IMR-90 (cell line): ENCODE measurements at regions of chr4 and their contacts with region 1.

Region 1: GRCh38 chr4:187576751-187577150 is 418.8 kb upstream of the ZFP42 start:
- DNase-seq: no peak
- ATAC-seq: no peak
- H3K4me3 ChIP-seq: no peak overlapping the region
- H3K27ac ChIP-seq: no peak overlapping the region
- H3K4me1 ChIP-seq: peaks cover 2% of the 10 kb centered on the region; the same call in 1 of the 2 replicates
- H3K27me3 ChIP-seq: no peaks in the 10 kb centered on the region
- CTCF ChIP-seq: no peak
- POLR2A ChIP-seq: no peak
- RAD21 ChIP-seq: no peak

Region 2: GRCh38 chr4:186557486-186557885 is 1019.3 kb before region 1 on chr4:
- CTCF ChIA-PET with region 1: no interaction called
- POLR2A ChIA-PET with region 1: interaction called, 12 read pairs
- dilution Hi-C with region 1: no loop called
- in situ Hi-C with region 1: no loop called
- intact Hi-C with region 1: no loop called
- DNase-seq: peak; percentile 45
- ATAC-seq: peak; percentile 69
- H3K4me3 ChIP-seq: no peak overlapping the region
- H3K27ac ChIP-seq: no peak overlapping the region
- H3K4me1 ChIP-seq: peaks cover 3% of the 10 kb centered on the region; the same call in 1 of the 2 replicates
- H3K27me3 ChIP-seq: peaks cover 16% of the 10 kb centered on the region
- CTCF ChIP-seq: no peak
- POLR2A ChIP-seq: no peak
- RAD21 ChIP-seq: no peak

Region 3: DNA sequence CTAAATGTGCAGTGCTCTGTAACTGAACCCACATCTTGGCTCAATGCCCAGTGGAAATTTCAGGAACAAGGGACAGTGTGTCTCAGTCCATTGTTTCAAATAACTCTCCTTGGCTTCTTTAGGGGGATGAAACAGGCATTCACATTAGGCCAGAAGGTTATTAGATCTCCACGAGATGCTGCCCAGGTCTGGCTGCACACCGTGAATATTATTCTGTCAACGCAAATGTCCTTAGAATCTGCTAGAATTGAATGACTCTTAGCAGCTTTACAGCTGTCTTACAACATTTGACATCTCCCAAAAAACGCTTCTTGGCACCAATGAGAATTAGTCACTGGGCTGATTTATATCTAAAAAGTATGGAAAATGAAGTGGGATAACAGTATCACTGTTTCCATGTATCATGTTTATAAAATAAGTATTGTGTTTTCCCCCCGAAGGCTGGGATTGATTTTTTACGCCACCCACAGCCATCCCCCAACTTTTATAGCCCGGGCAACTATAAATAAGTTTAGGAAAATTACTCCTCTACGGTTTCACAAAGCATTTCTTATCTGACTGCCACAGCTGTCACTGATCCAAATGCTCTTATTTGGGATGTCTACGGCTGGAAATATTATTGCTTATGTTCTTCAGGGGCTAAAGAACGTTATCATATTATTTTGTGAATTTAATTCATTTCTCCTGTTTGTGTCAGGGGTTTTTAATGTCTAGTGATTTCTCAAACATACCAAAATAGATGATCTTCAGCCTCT is 293.4 kb before region 1 on chr4:
- CTCF ChIA-PET with region 1: no interaction called
- POLR2A ChIA-PET with region 1: no interaction called
- dilution Hi-C with region 1: no loop called
- in situ Hi-C with region 1: no loop called
- intact Hi-C with region 1: loop called (anchors 1 kb)
- DNase-seq: peak; percentile 46
- ATAC-seq: no peak
- H3K4me3 ChIP-seq: no peak overlapping the region
- H3K27ac ChIP-seq: no peak overlapping the region
- H3K4me1 ChIP-seq: peaks cover 7% of the 10 kb centered on the region
- H3K27me3 ChIP-seq: no peaks in the 10 kb centered on the region
- CTCF ChIP-seq: no peak
- POLR2A ChIP-seq: no peak
- RAD21 ChIP-seq: no peak

Region 4: DNA sequence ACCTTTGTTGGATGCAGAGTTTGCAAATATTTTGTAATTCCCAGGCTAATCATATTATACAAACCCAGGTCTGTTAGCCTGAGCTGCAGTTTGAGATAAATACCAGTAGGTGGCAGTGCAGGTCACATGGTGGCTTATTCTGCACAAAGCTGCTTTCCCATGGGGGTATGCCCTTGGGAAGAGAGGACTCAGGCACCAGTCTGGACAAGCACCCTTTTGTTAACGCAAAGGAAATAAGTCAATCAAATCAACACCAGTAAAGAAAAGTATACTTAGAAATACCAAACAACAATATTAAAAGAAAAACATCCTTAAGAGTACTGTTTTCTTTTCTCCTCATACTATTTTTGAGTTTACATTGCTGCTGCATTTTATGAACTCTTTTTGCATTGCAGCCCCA is 29.8 kb after region 1 on chr4:
- CTCF ChIA-PET with region 1: no interaction called
- POLR2A ChIA-PET with region 1: no interaction called
- dilution Hi-C with region 1: no loop called
- in situ Hi-C with region 1: no loop called
- intact Hi-C with region 1: no loop called
- DNase-seq: peak; percentile 69
- ATAC-seq: peak; percentile 64
- H3K4me3 ChIP-seq: no peak overlapping the region
- H3K27ac ChIP-seq: peak overlapping the region; percentile 55; the same call in 1 of the 2 replicates
- H3K4me1 ChIP-seq: peaks cover 11% of the 10 kb centered on the region
- H3K27me3 ChIP-seq: no peaks in the 10 kb centered on the region
- CTCF ChIP-seq: peak; percentile 86
- POLR2A ChIP-seq: no peak
- RAD21 ChIP-seq: peak; percentile 90